Esophagus squamous epithelium (tissue), 5 donors: ENCODE measurements at regions of chr6 and their contacts with region 1.

Region 1: GRCh38 chr6:109009236-109009961 is 85.2 kb downstream of the SESN1 start:
- DNase-seq: peak; percentile 66
- H3K4me3 ChIP-seq: peak overlapping the region; percentile 81 to 96 (median 92)
- H3K27ac ChIP-seq: peak overlapping the region; percentile 96 to 98 (median 97)
- H3K4me1 ChIP-seq: peaks cover 4 to 70% (median 7%) of the 10 kb centered on the region in 3 donors
- H3K27me3 ChIP-seq: no peaks in the 10 kb centered on the region
- CTCF ChIP-seq: peak in 5 of 6 experiments; percentile 29 to 82 (median 74)
- POLR2A ChIP-seq: peak in 3 of 4 donors; percentile 85 to 96 (median 96)

Region 2: GRCh38 chr6:108558372-108559096 is 450.9 kb before region 1 on chr6:
- intact Hi-C with region 1: loop called (anchors 10 kb)
- DNase-seq: peak; percentile 91
- H3K4me3 ChIP-seq: peak overlapping the region; percentile 69 to 98 (median 80)
- H3K27ac ChIP-seq: peak overlapping the region; percentile 95 to 100 (median 98)
- H3K4me1 ChIP-seq: peaks cover 15 to 50% (median 16%) of the 10 kb centered on the region in 3 donors
- H3K27me3 ChIP-seq: no peaks in the 10 kb centered on the region
- CTCF ChIP-seq: no peak
- POLR2A ChIP-seq: peak in 3 of 4 donors; percentile 28 to 86 (median 81)

Region 3: DNA sequence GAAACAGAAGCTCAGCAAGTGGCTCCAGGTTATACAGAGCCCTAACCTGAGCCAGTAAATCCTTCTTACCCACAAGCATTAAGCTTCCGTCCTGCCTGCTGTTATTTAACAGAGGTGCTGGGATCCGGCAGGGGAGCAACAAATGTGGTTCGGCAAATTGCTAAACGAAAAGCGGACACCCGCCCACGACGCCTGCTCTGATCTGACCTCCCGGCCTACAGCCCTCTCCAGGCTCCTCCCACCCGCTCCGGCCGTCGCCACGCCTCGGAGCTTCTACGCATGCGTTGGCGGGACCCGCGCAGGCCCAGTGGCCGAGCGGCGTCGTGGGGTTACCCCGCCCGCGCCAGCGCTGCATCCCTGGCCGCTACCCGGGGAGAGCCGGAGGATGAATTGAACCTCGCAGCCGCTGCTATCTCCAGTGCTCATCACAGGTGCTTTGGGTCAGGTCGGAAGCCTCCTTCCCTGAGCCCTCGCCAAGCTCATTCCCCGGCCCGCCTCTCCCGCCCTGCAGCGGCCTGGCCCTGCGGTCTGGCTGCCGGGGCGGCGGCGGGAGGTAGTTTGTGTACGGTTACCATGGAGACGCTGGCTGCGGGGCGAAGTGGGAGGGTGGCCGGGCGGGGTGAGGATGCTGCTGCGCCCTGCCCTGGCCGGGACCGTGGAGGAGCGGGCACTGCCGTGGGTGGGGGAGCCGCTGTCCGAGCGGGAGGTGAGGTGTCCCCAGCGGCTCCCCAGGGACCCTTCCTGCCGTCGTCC is 161.1 kb before region 1 on chr6 and contains the start of gene ARMC2:
- intact Hi-C with region 1: no loop called
- DNase-seq: peak; percentile 50
- H3K4me3 ChIP-seq: peak within 1 kb of the TSS; percentile 49 to 97 (median 70)
- H3K27ac ChIP-seq: peak within 1 kb of the TSS; percentile 56 to 90 (median 82)
- H3K4me1 ChIP-seq: peaks cover 0 to 33% (median 20%) of the 10 kb centered on the region in 3 donors
- H3K27me3 ChIP-seq: no peaks in the 10 kb centered on the region
- CTCF ChIP-seq: peak in 1 of 6 experiments; percentile 17
- POLR2A ChIP-seq: peak in 2 of 4 donors; percentile 23 to 72
- total RNA-seq, gene ARMC2: 0.27 to 4.1 (median 1.2) TPM

Region 4: DNA sequence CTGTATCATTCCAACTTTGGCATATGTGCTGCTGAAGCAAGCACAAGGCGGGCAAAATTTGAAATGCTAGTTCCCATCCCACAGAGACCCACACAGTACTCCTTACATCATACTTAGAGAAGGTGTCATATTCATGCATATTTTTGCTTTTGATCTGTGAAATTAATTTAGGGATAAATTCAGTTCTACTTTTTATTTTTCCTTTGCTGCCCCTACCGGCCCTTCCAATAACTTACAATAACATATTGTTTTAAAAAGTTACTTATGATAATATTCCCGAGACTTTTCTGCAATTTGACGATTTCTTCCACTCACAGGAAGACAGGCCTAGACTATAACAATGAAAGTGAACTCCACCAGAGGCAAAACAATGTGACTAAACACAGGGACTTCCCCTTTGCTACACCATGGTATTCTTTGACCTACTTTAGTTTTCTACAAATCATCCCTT is 50.2 kb after region 1 on chr6:
- intact Hi-C with region 1: loop called (anchors 10 kb)
- DNase-seq: no peak
- H3K4me3 ChIP-seq: no peak overlapping the region
- H3K27ac ChIP-seq: peak overlapping the region in 3 of 4 donors; percentile 17 to 43 (median 36)
- H3K4me1 ChIP-seq: peaks cover 0 to 24% (median 10%) of the 10 kb centered on the region in 3 donors
- H3K27me3 ChIP-seq: no peaks in the 10 kb centered on the region
- CTCF ChIP-seq: peak in 2 of 6 experiments; percentile 11 to 12
- POLR2A ChIP-seq: no peak